Activated CD8-positive, alpha-beta T cell treated with anti-CD3 and anti-CD28 coated beads, Interleukin-2, amount 10 ng/mL, durations not matched to agents 7 days and 5 days (primary cell): ENCODE measurements at regions of chr16 and their contacts with region 1.

Region 1: DNA sequence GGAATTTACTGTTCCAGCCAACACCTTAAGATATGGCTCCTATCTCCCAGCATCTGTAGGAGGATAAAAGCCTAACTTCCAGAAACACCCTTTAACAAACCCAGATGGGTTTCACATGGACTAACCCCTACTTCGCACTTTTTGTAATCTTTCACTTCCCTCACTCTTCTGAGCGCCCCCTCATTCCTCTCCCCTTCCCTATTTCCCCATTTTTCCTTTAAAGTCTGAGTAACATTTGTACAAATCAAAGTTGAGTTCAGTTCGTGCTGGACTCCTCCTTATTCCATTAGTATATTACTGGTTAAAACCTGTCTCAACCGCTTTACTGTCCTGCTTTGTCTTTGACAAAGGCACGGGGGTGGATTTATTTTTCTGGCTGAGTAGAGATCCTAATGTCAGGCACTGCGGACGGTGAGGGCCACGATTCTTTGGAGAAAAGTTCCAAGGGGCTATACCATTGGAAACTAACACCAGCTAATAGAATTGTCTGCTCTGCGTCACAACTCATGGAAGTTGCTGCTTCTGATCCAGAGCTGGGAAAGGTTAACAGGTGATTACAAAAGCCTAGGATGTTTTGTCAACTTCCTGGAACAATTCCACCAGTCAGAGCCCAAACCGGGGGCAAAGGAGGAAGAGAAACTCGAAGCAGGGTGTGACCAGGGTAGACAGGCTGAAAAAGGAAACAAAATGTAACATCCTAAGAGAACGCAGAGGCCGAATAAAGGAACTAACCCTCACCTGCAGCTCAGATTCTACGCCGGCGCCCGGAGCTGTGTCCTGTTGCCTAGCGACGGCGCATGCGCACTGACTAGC is 12.5 kb downstream of the TAT start:
- DNase-seq: no peak
- ATAC-seq: no peak
- H3K4me3 Mint-ChIP-seq: peak overlapping the region; percentile 91
- H3K27ac Mint-ChIP-seq: peak overlapping the region; percentile 97
- H3K4me1 Mint-ChIP-seq: peaks cover 19% of the 10 kb centered on the region
- H3K27me3 Mint-ChIP-seq: peaks cover 12% of the 10 kb centered on the region

Region 2: DNA sequence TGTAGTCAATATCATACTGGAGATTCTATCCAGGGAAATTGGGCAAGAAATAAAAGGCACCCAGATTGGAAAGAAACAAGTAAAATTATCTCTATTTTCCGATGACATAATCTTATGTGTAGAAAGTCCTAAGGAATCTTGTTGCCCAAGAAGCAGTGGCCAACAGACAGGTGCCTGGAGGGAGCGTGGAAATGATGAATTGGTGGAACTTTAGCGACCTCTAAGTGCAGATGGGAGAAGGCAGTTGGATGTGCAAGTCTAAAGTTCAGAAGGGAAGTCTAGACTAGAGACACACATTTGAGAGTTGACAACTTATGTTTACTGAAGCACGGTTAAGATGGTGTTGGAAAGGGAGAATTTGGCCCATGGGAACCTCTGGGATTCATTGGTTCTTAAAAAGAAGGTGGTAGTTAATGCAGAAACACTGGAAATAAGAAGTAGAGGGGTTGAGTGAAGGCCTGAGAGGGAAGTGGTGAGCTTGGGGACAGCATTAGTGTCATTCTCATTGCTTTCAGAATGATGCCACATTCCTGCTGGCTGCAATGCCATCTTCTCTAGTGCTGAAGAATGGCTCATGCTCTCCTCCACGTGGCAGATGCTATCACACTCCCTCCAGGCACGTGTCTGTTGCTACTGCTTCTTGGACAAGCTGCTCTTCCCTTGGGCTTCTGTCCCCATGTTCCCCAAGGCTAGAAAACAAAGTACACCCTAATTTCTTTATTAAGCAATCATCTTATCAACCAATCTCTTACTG is 11.5 kb before region 1 on chr16:
- CTCF ChIA-PET with region 1: interaction called, 11 read pairs
- POLR2A ChIA-PET with region 1: interaction called, 3 read pairs
- DNase-seq: no peak
- ATAC-seq: no peak
- H3K4me3 Mint-ChIP-seq: no peak overlapping the region
- H3K27ac Mint-ChIP-seq: no peak overlapping the region
- H3K4me1 Mint-ChIP-seq: no peaks in the 10 kb centered on the region
- H3K27me3 Mint-ChIP-seq: peaks cover 22% of the 10 kb centered on the region

Region 3: GRCh38 chr16:71576971-71577370 is 12.6 kb after region 1 on chr16 and contains the start of gene TAT:
- CTCF ChIA-PET with region 1: interaction called, 15 read pairs
- POLR2A ChIA-PET with region 1: interaction called, 3 read pairs
- DNase-seq: no peak
- ATAC-seq: no peak
- H3K4me3 Mint-ChIP-seq: no peak within 1 kb of the TSS
- H3K27ac Mint-ChIP-seq: no peak within 1 kb of the TSS
- H3K4me1 Mint-ChIP-seq: no peaks in the 10 kb centered on the region
- H3K27me3 Mint-ChIP-seq: peaks cover 16% of the 10 kb centered on the region
- total RNA-seq, gene TAT: not detected

Region 4: DNA sequence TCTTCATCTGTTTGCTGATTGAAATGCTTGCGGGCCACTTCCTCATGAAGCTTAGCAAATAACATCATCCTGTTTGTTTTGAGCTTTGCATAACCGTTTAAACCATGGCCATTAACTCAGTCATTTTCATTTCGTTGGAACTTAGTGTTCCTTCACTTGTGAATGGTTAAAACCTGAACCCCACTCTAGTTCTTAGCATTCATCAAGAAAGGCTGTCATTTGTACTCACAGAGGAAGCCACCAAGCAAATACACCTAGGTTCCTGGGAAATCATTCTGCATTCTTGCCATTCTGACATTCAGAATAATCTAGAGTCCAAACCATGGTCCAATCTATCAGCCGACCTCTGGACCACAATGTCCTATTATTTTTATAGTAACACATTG is 20.9 kb after region 1 on chr16:
- CTCF ChIA-PET with region 1: interaction called, 15 read pairs
- POLR2A ChIA-PET with region 1: interaction called, 3 read pairs
- DNase-seq: no peak
- ATAC-seq: no peak
- H3K4me3 Mint-ChIP-seq: no peak overlapping the region
- H3K27ac Mint-ChIP-seq: no peak overlapping the region
- H3K4me1 Mint-ChIP-seq: no peaks in the 10 kb centered on the region
- H3K27me3 Mint-ChIP-seq: peaks cover 21% of the 10 kb centered on the region

Region 5: DNA sequence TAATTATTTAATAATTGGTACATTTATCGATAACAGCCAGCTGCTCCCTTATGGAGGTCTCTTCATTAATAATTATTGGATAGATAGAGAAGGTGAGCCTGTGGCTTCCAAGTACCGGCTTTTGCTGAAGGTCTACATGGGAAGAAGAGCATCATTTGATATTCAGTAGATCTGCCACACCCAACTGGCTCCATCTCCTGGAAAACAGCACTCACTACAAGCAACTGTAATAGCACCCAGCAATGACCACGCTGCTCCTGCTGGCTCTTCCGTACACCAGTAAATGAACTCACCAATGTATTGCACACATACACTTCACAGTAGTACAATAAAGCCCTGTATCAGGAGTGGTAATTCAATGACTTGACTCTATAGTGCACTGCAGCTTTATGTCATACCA is 81.1 kb after region 1 on chr16:
- CTCF ChIA-PET with region 1: interaction called, 11 read pairs
- POLR2A ChIA-PET with region 1: no interaction called
- DNase-seq: peak; percentile 29
- ATAC-seq: peak; percentile 71
- H3K4me3 Mint-ChIP-seq: no peak overlapping the region
- H3K27ac Mint-ChIP-seq: no peak overlapping the region
- H3K4me1 Mint-ChIP-seq: no peaks in the 10 kb centered on the region
- H3K27me3 Mint-ChIP-seq: no peaks in the 10 kb centered on the region

Region 6: GRCh38 chr16:71961066-71962039 is 397.0 kb after region 1 on chr16:
- CTCF ChIA-PET with region 1: interaction called, 25 read pairs
- POLR2A ChIA-PET with region 1: no interaction called
- DNase-seq: peak; percentile 89
- ATAC-seq: peak; percentile 95
- H3K4me3 Mint-ChIP-seq: no peak overlapping the region
- H3K27ac Mint-ChIP-seq: no peak overlapping the region
- H3K4me1 Mint-ChIP-seq: peaks cover 13% of the 10 kb centered on the region
- H3K27me3 Mint-ChIP-seq: no peaks in the 10 kb centered on the region